CD14-positive monocyte (primary cell): ENCODE measurements at regions of chr11 and their contacts with region 1.

Region 1: GRCh38 chr11:5690216-5690615 is 626 bp downstream of the TRIM22 start:
- DNase-seq: peak in 2 of 3 donors; percentile 38 to 41
- H3K4me3 ChIP-seq: peak overlapping the region; percentile 82 to 100 (median 83)
- H3K4me3 Mint-ChIP-seq: peak overlapping the region; percentile 90 to 97
- H3K27ac ChIP-seq: peak overlapping the region; percentile 81 to 92
- H3K27ac Mint-ChIP-seq: peak overlapping the region; percentile 96 to 100 (median 99)
- H3K4me1 ChIP-seq: peaks cover 38 to 40% of the 10 kb centered on the region in 2 donors
- H3K4me1 Mint-ChIP-seq: peaks cover 49% of the 10 kb centered on the region
- H3K27me3 ChIP-seq: no peaks in the 10 kb centered on the region
- H3K27me3 Mint-ChIP-seq: no peaks in the 10 kb centered on the region
- CTCF ChIP-seq: no peak

Region 2: DNA sequence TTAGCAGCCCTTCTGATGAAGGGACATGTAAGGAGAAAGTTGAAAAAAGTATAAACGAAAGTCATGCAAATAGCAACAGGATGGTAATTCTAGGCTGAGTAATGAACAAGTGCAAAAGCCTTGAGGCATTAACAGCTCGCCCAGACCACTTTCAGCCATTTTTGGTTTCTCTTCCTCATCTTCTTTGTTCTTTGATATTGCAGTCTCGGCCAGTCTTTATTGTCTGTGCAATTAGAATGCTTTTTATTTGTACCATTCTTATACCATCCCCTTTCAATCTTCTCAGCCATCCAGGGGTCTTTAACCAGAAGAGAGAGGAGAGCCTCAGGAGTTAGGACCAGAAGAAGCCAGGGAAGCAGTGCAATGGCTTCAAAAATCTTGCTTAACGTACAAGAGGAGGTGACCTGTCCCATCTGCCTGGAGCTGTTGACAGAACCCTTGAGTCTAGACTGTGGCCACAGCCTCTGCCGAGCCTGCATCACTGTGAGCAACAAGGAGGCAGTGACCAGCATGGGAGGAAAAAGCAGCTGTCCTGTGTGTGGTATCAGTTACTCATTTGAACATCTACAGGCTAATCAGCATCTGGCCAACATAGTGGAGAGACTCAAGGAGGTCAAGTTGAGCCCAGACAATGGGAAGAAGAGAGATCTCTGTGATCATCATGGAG is 58.1 kb before region 1 on chr11:
- intact Hi-C with region 1: loop called in 1 of 2 experiments (anchors 5 kb)
- DNase-seq: peak; percentile 17 to 53 (median 44)
- H3K4me3 ChIP-seq: peak overlapping the region in 1 of 3 experiments; percentile 35
- H3K4me3 Mint-ChIP-seq: peak overlapping the region; percentile 58 to 63
- H3K27ac ChIP-seq: peak overlapping the region in 1 of 2 donors; percentile 54
- H3K27ac Mint-ChIP-seq: peak overlapping the region; percentile 23 to 91 (median 70)
- H3K4me1 ChIP-seq: peaks cover 11 to 14% of the 10 kb centered on the region in 2 donors
- H3K4me1 Mint-ChIP-seq: peaks cover 29% of the 10 kb centered on the region
- H3K27me3 ChIP-seq: no peaks in the 10 kb centered on the region
- H3K27me3 Mint-ChIP-seq: peaks cover 0 to under 1% (median 0%) of the 10 kb centered on the region in 3 donors
- CTCF ChIP-seq: no peak